CD4-positive, alpha-beta T cell (primary cell): ENCODE measurements at regions of chr14 and their contacts with region 1.

Region 1: GRCh38 chr14:23095196-23096108 is at the start of gene C14orf119:
- DNase-seq: peak in 12 of 14 experiments; percentile 99 to 100 (median 100)
- ATAC-seq: peak; percentile 85
- H3K4me3 ChIP-seq: peak within 1 kb of the TSS; percentile 81
- H3K4me3 Mint-ChIP-seq: no peak within 1 kb of the TSS
- H3K27ac ChIP-seq: peak within 1 kb of the TSS; percentile 96 to 97
- H3K27ac Mint-ChIP-seq: no peak within 1 kb of the TSS
- H3K4me1 ChIP-seq: peaks cover 29% of the 10 kb centered on the region
- H3K4me1 Mint-ChIP-seq: peaks cover 46% of the 10 kb centered on the region
- H3K27me3 ChIP-seq: no peaks in the 10 kb centered on the region
- H3K27me3 Mint-ChIP-seq: no peaks in the 10 kb centered on the region
- CTCF ChIP-seq: no peak
- total RNA-seq, gene C14orf119: 3.1 to 3.9 TPM

Region 2: DNA sequence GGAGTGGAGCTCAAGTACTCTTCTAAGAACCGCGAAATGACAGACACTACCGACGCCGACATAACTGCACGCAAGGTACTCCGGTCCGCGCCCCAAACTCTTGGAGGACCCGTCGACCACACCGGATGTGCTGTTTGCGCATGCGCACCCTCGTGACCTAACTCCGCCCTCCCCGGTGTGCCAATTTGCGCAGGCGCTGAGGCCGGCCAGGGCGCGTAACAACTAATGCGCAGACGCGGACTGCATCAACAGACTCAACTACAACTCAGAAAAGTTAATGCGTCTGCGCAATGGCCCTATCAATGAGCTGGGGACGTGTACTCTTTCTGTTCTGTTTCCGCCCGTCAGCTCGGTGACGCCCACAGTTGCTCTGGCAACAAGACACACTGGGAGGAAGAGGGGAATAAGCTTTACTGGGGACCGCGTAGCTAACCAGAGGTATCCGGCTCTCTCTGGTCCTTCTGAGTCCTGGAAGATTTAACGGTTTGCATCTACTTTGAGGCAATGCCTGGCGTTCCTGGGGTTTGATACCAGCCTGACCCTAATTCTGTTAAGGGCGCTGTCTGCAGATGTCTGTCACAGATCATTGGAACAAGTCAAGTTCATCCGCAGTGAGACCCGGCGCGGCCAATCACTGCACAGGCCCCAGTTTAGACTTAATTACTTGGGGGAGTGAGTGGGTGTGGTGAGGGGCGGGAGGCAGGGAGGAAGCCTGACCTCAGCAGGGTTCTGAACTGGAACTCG is 506.2 kb before region 1 on chr14 and contains the start of gene DAD1:
- CTCF ChIA-PET with region 1: interaction called, 4 read pairs
- POLR2A ChIA-PET with region 1: interaction called, 12 read pairs
- intact Hi-C with region 1: no loop called
- DNase-seq: peak; percentile 98 to 100 (median 100)
- ATAC-seq: peak; percentile 87
- H3K4me3 ChIP-seq: peak within 1 kb of the TSS; percentile 82
- H3K4me3 Mint-ChIP-seq: peak within 1 kb of the TSS; percentile 96
- H3K27ac ChIP-seq: peak within 1 kb of the TSS; percentile 92 to 96
- H3K27ac Mint-ChIP-seq: peak within 1 kb of the TSS; percentile 98
- H3K4me1 ChIP-seq: peaks cover 39% of the 10 kb centered on the region
- H3K4me1 Mint-ChIP-seq: peaks cover 60% of the 10 kb centered on the region
- H3K27me3 ChIP-seq: no peaks in the 10 kb centered on the region
- H3K27me3 Mint-ChIP-seq: no peaks in the 10 kb centered on the region
- CTCF ChIP-seq: no peak
- total RNA-seq, gene DAD1: 41.8 to 44.1 TPM

Region 3: DNA sequence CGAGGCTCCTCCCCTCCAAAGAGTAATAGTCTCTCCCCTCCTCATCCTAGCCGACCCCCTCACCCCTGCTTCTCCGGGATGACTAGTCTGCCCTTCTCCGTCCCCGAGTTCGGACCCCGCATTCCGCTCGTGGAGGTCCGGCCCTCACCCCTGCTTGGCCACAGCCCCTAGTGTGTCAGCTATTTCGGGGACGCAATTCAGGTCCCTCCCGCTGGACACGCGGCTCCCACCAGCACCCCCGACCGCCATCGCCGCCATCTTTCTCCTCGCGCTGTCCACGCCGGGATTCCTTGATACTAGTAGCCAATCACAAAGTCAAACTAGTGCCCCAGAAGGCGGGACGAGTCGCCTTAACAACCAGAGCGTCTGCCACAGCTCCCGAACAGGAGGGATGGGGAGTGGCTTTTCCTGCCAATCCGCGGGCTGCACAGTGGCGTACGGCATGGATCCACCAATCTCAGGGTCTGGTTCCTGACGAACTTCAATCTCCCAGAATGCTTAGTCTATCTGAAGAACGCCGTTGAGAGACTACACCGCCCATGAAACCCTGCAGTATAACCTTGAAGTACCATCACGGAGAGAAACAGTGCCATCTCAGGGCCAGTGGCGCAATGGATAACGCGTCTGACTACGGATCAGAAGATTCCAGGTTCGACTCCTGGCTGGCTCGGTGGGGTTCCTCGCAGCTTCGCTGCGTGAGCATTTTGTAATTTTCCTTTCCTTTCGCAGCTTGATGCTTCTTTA is 166.2 kb before region 1 on chr14 and contains the start of gene PRMT5:
- CTCF ChIA-PET with region 1: interaction called, 4 read pairs
- POLR2A ChIA-PET with region 1: interaction called, 31 read pairs
- intact Hi-C with region 1: no loop called
- DNase-seq: peak; percentile 93 to 100 (median 97)
- ATAC-seq: peak; percentile 96
- H3K4me3 ChIP-seq: peak within 1 kb of the TSS; percentile 91
- H3K4me3 Mint-ChIP-seq: no peak within 1 kb of the TSS
- H3K27ac ChIP-seq: peak within 1 kb of the TSS; percentile 79 to 88
- H3K27ac Mint-ChIP-seq: no peak within 1 kb of the TSS
- H3K4me1 ChIP-seq: peaks cover 30% of the 10 kb centered on the region
- H3K4me1 Mint-ChIP-seq: peaks cover 11% of the 10 kb centered on the region
- H3K27me3 ChIP-seq: no peaks in the 10 kb centered on the region
- H3K27me3 Mint-ChIP-seq: no peaks in the 10 kb centered on the region
- CTCF ChIP-seq: no peak
- total RNA-seq, gene PRMT5: 15.6 to 19.3 TPM

Region 4: GRCh38 chr14:23006544-23007419 is 88.7 kb before region 1 on chr14:
- CTCF ChIA-PET with region 1: interaction called, 7 read pairs
- POLR2A ChIA-PET with region 1: interaction called, 40 read pairs
- intact Hi-C with region 1: no loop called
- DNase-seq: peak; percentile 92 to 99 (median 96)
- ATAC-seq: peak; percentile 94
- H3K4me3 ChIP-seq: peak overlapping the region; percentile 80
- H3K4me3 Mint-ChIP-seq: peak overlapping the region; percentile 95
- H3K27ac ChIP-seq: peak overlapping the region; percentile 83 to 84
- H3K27ac Mint-ChIP-seq: peak overlapping the region; percentile 93
- H3K4me1 ChIP-seq: peaks cover 26% of the 10 kb centered on the region
- H3K4me1 Mint-ChIP-seq: peaks cover 52% of the 10 kb centered on the region
- H3K27me3 ChIP-seq: no peaks in the 10 kb centered on the region
- H3K27me3 Mint-ChIP-seq: no peaks in the 10 kb centered on the region
- CTCF ChIP-seq: peak; percentile 60

Region 5: DNA sequence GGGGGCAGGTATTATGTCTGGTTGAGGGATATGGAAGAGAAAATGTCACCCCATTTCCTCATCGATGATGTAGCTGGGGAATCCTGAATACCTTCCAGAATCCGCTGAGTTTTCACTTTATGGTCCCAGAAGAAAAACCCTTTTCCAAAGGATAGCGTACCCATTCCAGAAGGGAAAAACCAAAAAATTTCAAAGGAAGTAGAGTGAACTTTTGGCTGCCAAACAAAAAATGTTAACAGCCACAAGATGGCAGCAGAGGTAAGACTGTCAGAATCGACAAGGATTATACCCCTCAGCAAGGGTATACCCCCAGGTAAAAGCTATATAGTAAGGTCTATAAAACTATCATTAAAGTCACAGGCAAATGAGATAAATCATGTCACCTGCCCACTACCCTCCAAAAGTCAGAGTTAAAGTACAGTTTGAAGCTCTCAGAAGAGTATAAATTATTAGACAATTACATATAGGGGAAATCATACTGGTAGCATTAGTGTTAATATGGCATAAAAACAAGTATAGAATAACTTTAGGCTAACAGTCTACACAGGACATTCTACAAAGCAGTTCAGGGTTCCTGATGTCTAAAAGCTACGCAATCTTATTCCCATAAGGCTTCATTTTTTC is 18.6 kb before region 1 on chr14:
- CTCF ChIA-PET with region 1: interaction called, 28 read pairs
- POLR2A ChIA-PET with region 1: interaction called, 35 read pairs
- intact Hi-C with region 1: loop called in 1 of 2 experiments (anchors 2 kb)
- DNase-seq: peak in 4 of 14 experiments; percentile 38 to 72 (median 56)
- ATAC-seq: peak; percentile 79
- H3K4me3 ChIP-seq: no peak overlapping the region
- H3K4me3 Mint-ChIP-seq: no peak overlapping the region
- H3K27ac ChIP-seq: no peak overlapping the region
- H3K27ac Mint-ChIP-seq: peak overlapping the region; percentile 22
- H3K4me1 ChIP-seq: peaks cover 4% of the 10 kb centered on the region
- H3K4me1 Mint-ChIP-seq: peaks cover 10% of the 10 kb centered on the region
- H3K27me3 ChIP-seq: no peaks in the 10 kb centered on the region
- H3K27me3 Mint-ChIP-seq: no peaks in the 10 kb centered on the region
- CTCF ChIP-seq: peak; percentile 68

Region 6: DNA sequence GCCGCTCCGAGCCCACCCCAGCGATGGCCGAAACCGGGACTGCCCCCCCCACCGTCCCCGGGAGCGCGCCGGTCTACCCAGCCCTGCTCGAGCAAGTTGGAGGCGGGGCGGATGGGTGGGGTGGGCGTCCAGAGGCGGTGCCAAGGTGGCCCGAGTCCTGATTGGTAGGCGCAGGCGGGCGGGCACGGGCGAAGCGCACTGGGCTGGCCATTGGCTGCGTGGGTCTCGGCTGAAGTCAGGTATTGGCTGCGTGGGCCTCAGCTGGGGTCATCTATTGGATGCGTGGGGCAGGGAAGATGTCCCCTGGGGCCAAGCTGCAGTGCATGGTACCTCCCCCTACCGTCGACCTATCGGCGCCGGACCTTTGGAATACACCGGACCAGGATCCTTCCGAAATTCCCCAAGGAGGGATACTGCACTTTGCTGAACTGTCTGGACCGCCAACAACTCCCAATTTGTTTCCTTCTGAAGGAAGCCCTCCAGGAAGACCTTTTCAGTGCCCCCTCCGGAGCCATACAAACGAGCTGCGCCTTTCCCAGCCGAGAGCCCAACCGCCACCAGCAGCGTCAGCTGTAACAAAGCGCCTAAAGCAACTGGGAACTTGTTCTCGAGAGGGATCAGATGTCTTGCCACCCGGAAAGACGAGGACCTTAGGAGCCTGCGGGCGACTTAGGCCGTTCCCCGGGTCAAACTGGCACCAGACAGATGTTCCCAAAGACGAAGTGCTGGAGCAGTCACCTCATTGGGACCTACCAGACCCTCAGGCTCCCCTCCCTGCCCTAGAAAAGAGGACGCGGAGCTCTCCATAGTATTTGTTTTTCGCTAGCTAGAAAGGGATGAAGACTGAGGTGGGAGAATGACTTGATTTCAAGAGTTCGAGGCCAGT is 190.8 kb after region 1 on chr14 and contains the start of gene HOMEZ:
- CTCF ChIA-PET with region 1: no interaction called
- POLR2A ChIA-PET with region 1: interaction called, 14 read pairs
- intact Hi-C with region 1: loop called (anchors 5 to 10 kb)
- DNase-seq: peak; percentile 94 to 98 (median 97)
- ATAC-seq: peak; percentile 97
- H3K4me3 ChIP-seq: peak within 1 kb of the TSS; percentile 81
- H3K4me3 Mint-ChIP-seq: peak within 1 kb of the TSS; percentile 95
- H3K27ac ChIP-seq: peak within 1 kb of the TSS; percentile 79 to 81
- H3K27ac Mint-ChIP-seq: peak within 1 kb of the TSS; percentile 94
- H3K4me1 ChIP-seq: peaks cover 17% of the 10 kb centered on the region
- H3K4me1 Mint-ChIP-seq: peaks cover 32% of the 10 kb centered on the region
- H3K27me3 ChIP-seq: no peaks in the 10 kb centered on the region
- H3K27me3 Mint-ChIP-seq: no peaks in the 10 kb centered on the region
- CTCF ChIP-seq: no peak
- total RNA-seq, gene HOMEZ: 2.0 to 2.8 TPM

Region 7: DNA sequence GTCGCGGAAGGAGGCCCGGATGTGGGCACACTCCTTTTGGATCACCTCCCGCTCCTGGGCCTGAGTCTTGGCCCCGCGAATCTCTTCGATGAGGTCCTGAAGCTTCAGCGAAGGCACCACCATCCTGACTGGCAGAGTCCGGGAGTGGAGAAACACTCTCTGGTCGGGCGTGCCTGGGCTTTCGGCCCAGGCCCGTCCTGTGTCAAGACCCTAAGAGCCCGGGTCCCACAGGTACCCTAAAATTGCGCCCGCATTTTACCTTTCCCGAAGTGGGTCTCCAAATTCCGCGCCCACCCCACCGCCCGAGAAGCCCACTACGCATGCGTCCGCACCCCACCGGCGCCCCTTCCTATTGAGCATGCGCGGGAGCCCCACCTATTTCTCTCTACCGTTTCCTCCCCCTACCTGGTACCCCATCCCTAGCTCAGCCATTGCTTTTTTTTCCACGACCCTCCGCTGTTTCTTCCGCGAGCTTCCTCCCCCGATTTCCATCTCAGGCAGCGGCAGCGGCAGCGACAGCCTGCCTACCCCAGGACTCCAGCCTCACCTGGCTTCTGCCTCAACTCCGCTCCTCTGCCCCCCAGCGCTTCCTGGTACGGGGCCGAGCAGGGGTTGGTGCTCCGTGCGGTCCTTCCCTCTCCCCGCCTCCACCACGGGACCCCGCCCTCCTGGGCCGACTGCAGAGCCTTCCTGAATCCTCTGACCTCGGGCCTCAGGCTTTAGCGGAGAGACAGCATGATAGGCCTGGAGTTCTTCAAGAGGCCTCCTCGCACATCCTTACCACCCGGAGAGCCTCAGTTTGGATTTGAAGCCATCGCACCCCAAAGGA is 472.0 kb after region 1 on chr14 and contains the start of gene AP1G2:
- CTCF ChIA-PET with region 1: no interaction called
- POLR2A ChIA-PET with region 1: no interaction called
- intact Hi-C with region 1: loop called in 1 of 2 experiments (anchors 10 kb)
- DNase-seq: peak; percentile 69 to 94 (median 83)
- ATAC-seq: peak; percentile 91
- H3K4me3 ChIP-seq: peak within 1 kb of the TSS; percentile 75
- H3K4me3 Mint-ChIP-seq: peak within 1 kb of the TSS; percentile 99
- H3K27ac ChIP-seq: peak within 1 kb of the TSS; percentile 75 to 79
- H3K27ac Mint-ChIP-seq: peak within 1 kb of the TSS; percentile 96
- H3K4me1 ChIP-seq: peaks cover 40% of the 10 kb centered on the region
- H3K4me1 Mint-ChIP-seq: peaks cover 52% of the 10 kb centered on the region
- H3K27me3 ChIP-seq: no peaks in the 10 kb centered on the region
- H3K27me3 Mint-ChIP-seq: peaks cover 7% of the 10 kb centered on the region
- CTCF ChIP-seq: no peak
- total RNA-seq, gene AP1G2: 193 to 198 TPM